Activated naive CD4-positive, alpha-beta T cell treated with anti-CD3 and anti-CD28 coated beads for 36 hours (primary cell): ENCODE measurements at regions of chr7 and their contacts with region 1.

Region 1: GRCh38 chr7:51123322-51124029 is 193.1 kb downstream of the COBL start:
- DNase-seq: peak; percentile 94
- H3K4me3 Mint-ChIP-seq: no peak overlapping the region
- H3K27ac Mint-ChIP-seq: peak overlapping the region; percentile 95
- H3K4me1 Mint-ChIP-seq: peaks cover 36% of the 10 kb centered on the region
- H3K27me3 Mint-ChIP-seq: no peaks in the 10 kb centered on the region

Region 2: GRCh38 chr7:50147951-50148808 is 975.3 kb before region 1 on chr7:
- CTCF ChIA-PET with region 1: no interaction called
- intact Hi-C with region 1: loop called (anchors 1 kb)
- DNase-seq: peak; percentile 73
- H3K4me3 Mint-ChIP-seq: peak overlapping the region; percentile 34
- H3K27ac Mint-ChIP-seq: peak overlapping the region; percentile 91
- H3K4me1 Mint-ChIP-seq: peaks cover 91% of the 10 kb centered on the region
- H3K27me3 Mint-ChIP-seq: no peaks in the 10 kb centered on the region

Region 3: GRCh38 chr7:50349963-50350944 is 773.2 kb before region 1 on chr7:
- CTCF ChIA-PET with region 1: no interaction called
- intact Hi-C with region 1: loop called (anchors 5 kb)
- DNase-seq: peak; percentile 95
- H3K4me3 Mint-ChIP-seq: peak overlapping the region; percentile 33
- H3K27ac Mint-ChIP-seq: peak overlapping the region; percentile 95
- H3K4me1 Mint-ChIP-seq: peaks cover 97% of the 10 kb centered on the region
- H3K27me3 Mint-ChIP-seq: no peaks in the 10 kb centered on the region

Region 4: DNA sequence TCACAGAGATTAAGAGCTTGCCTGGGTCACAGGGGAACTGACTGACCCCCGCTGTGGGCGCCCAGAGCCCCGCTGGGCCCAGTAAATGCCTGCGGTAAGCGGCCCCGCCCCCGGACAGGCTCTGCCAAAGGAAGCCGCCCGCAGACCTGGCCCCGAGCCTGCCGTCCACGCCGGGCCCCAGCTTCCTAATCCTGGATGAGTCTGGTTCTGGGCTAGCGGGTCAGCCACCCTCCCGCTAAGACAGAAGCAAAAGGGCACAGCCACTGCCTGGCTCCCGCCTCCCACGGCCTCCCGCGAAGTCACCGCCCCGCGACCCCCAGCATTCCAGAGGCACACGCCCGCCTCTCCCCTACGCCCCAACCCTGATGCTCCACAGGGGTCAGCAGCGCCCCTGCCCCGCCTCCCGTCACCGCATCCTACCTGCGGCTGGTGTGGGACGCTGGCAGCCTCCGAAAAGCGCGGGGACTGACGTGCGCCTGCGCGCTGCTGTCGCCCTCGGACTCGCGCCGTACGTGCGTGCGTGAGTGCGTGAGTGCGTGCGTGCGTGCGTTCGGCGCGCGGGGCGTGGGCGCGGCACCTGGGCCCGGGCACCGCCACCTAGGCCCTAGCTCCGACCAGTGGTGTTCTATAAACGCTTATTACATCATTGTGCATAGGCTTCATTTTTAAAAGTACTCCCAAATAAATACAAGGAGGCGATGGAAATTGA is 673.4 kb before region 1 on chr7 and contains the start of gene FIGNL1:
- CTCF ChIA-PET with region 1: no interaction called
- intact Hi-C with region 1: loop called (anchors 1 kb)
- DNase-seq: peak; percentile 86
- H3K4me3 Mint-ChIP-seq: peak within 1 kb of the TSS; percentile 94
- H3K27ac Mint-ChIP-seq: peak within 1 kb of the TSS; percentile 91
- H3K4me1 Mint-ChIP-seq: peaks cover 45% of the 10 kb centered on the region
- H3K27me3 Mint-ChIP-seq: no peaks in the 10 kb centered on the region
- total RNA-seq, gene FIGNL1: 43.7 to 44.4 TPM

Region 5: DNA sequence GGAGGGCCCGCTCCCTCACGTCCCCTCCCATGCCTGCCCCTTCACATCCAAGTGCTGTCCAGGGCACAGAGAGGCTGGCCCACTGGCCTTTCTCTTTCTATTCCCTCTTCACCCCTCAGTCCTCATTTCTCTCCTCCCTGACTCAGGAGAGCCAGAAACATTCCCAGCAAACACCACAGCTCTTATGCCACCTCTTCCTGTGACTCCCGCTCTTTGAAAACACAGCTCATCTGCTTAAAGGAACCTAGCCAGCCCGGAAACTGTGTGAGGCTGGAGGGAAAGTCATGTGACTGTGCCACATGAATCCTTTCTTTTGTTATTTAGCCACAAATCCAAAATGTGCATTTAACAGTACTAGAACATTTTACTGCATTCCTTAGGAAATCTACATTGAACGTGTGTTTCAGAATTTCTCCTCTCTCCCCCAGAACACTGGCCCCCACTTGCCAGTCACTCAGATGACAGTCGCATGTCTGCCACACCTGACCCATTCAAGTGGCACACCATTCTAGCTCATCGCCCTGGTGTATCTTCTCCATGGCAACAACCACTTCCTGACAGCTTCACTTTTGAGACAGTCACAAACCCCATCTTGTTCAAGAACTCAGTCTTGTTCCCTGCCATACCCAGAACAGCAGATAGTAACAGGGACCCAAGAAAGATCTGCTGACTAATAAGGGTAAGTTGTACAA is 383.6 kb before region 1 on chr7:
- CTCF ChIA-PET with region 1: no interaction called
- intact Hi-C with region 1: loop called (anchors 1 kb)
- DNase-seq: peak; percentile 84
- H3K4me3 Mint-ChIP-seq: peak overlapping the region; percentile 59
- H3K27ac Mint-ChIP-seq: peak overlapping the region; percentile 84
- H3K4me1 Mint-ChIP-seq: peaks cover 34% of the 10 kb centered on the region
- H3K27me3 Mint-ChIP-seq: no peaks in the 10 kb centered on the region

Region 6: GRCh38 chr7:50832744-50833143 is 290.7 kb before region 1 on chr7:
- CTCF ChIA-PET with region 1: no interaction called
- intact Hi-C with region 1: loop called (anchors 1 kb)
- DNase-seq: peak; percentile 47
- H3K4me3 Mint-ChIP-seq: no peak overlapping the region
- H3K27ac Mint-ChIP-seq: peak overlapping the region; percentile 13
- H3K4me1 Mint-ChIP-seq: peaks cover 11% of the 10 kb centered on the region
- H3K27me3 Mint-ChIP-seq: peaks cover 10% of the 10 kb centered on the region

Region 7: DNA sequence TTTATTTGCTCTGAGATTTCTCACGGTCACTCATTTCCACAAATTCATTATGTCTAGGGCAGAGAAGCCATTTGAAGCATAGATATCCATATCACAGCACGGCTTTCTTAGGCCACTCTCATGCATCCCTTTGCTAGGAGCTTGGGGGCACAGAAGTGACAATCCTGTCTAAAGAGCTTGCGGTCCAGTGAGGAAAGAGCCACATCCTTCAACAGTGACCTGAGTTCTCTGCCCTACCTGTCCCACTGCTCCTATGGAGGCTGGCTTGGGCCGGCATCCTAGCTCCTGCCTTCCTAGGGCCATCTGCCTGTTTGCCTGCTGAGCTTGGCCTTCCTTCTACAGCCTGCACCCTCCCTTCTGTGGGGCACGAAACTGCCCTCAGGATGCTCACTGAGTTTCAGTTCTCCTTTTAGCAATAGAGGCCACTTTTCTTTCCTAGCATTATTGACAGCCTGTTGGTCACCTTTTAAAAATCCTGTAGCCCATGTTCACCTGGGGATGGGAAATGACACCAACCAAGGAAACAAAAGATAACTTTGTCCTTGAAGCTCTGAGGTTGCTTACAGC is 128.6 kb before region 1 on chr7:
- CTCF ChIA-PET with region 1: no interaction called
- intact Hi-C with region 1: no loop called
- DNase-seq: no peak
- H3K4me3 Mint-ChIP-seq: no peak overlapping the region
- H3K27ac Mint-ChIP-seq: no peak overlapping the region
- H3K4me1 Mint-ChIP-seq: no peaks in the 10 kb centered on the region
- H3K27me3 Mint-ChIP-seq: no peaks in the 10 kb centered on the region

Region 8: GRCh38 chr7:51045319-51046102 is 78.0 kb before region 1 on chr7:
- CTCF ChIA-PET with region 1: no interaction called
- intact Hi-C with region 1: no loop called
- DNase-seq: no peak
- H3K4me3 Mint-ChIP-seq: no peak overlapping the region
- H3K27ac Mint-ChIP-seq: no peak overlapping the region
- H3K4me1 Mint-ChIP-seq: no peaks in the 10 kb centered on the region
- H3K27me3 Mint-ChIP-seq: peaks cover 3% of the 10 kb centered on the region

Region 9: DNA sequence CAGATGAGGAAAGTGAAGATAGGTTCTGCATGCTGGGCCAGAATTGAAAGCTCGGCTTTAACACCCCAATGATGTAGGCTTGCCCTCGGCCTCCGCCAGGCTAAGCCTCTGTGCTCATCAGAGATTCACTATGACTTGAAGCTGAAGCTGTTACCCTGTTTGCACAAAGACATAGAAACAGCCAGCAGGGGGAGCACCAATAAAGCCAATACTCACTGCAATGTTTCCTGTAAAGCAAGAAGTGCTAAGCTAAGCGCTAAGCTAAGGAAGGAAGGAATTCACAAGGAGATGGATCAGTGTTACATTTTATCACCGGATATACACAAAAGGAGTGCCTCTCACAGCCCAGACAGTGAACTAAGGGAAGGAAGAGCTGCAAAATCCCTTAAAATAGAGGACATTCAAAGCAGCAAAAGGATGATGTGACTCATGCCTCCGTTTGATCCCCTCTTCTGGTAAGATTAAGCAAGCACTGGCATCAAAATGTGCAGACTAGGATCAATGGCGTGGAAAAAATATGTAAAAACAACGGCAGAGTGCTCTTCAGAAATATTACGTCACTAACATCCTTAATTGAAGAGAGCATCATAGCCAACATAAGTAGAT is 39.4 kb after region 1 on chr7:
- CTCF ChIA-PET with region 1: interaction called, 5 read pairs
- intact Hi-C with region 1: loop called (anchors 1 kb)
- DNase-seq: peak; percentile 92
- H3K4me3 Mint-ChIP-seq: no peak overlapping the region
- H3K27ac Mint-ChIP-seq: no peak overlapping the region
- H3K4me1 Mint-ChIP-seq: peaks cover 9% of the 10 kb centered on the region
- H3K27me3 Mint-ChIP-seq: peaks cover 12% of the 10 kb centered on the region